ENCODE measurements at regions of chr3 and their contacts with region 1.

Region 1: DNA sequence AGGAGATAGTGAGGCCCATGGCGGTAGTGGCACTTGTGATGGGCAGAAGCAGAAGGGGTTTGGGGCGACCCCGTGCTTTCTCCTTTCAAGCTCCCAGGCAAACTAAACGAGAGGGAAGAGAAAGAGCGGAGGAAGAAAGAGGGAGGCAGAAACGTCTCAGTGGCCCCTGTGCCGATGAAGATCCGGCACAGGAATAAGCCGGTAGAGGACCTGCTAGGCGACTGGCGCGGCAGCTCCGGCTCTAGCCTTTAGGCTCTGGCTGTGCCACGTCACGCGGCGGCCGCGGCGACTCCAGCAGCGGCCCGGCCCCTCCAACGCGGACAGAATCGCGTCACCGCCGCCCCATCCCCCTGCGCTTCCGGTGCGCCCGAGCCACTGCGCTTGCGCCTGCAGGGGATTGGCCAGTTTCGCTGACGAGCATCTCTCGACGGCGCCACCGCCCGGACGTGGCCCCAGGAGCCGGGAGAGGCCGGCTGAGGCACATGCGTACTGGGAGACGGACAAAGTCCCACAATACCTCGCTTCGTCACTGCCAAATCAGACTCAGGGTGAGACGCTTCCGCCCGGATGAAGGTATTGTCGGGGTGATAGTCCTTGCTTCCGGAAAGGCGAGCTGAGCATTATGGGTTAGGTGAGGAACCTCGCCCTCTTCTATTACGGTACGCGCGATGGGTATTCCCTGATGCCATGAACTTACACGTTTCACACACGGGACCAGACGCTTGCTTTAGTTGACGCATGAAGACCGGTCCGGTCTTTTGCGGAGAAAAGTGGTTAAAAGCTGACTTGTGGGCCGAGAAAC is at the start of gene ARF4:
- DNase-seq: peak; percentile 100
- ATAC-seq: peak; percentile 94
- H3K4me3 Mint-ChIP-seq: peak within 1 kb of the TSS; percentile 92
- H3K27ac Mint-ChIP-seq: peak within 1 kb of the TSS; percentile 99
- H3K4me1 Mint-ChIP-seq: peaks cover 28% of the 10 kb centered on the region
- H3K27me3 Mint-ChIP-seq: no peaks in the 10 kb centered on the region
- total RNA-seq, gene ARF4: 46.1 to 46.3 TPM

Region 2: DNA sequence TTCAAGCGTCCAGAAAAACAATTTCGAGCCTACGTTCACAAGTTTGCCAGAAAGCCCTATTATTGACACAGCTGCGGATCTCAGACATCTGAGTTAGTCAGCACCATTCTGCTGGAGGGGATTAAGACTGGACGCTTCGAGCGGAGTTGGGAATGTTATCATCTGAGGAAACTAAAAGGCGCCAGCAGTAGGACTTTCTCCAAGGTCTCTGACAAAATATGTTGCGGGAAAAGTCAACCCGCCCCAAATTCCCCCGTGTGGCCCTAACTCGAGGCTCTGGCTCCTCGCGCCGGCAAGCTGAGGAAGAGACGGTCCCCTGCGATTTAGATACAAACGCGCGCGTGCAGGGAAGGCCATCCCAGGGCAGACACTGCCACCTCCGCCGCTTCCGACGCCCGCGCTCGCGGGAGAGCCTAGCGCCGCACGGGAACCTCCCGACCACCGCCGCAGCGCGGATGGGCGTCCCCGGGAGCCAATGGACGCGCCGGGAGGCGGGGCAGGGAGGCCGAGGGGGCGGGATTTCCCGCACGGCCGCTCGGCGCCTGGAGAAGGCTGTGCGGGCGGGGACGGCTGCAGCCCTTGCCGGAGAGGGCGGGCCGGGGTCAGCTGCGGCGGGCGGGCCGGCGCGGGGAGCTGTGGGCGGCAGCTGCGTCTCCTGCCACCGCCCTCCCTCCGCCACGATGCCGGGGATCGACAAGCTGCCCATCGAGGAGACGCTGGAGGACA is 370.0 kb before region 1 on chr3 and contains the start of gene APPL1:
- POLR2A ChIA-PET with region 1: interaction called, 13 read pairs
- DNase-seq: peak; percentile 96
- ATAC-seq: peak; percentile 96
- H3K4me3 Mint-ChIP-seq: peak within 1 kb of the TSS; percentile 85
- H3K27ac Mint-ChIP-seq: peak within 1 kb of the TSS; percentile 75
- H3K4me1 Mint-ChIP-seq: peaks cover 26% of the 10 kb centered on the region
- H3K27me3 Mint-ChIP-seq: no peaks in the 10 kb centered on the region
- total RNA-seq, gene APPL1: 32.8 to 34.9 TPM

Region 3: DNA sequence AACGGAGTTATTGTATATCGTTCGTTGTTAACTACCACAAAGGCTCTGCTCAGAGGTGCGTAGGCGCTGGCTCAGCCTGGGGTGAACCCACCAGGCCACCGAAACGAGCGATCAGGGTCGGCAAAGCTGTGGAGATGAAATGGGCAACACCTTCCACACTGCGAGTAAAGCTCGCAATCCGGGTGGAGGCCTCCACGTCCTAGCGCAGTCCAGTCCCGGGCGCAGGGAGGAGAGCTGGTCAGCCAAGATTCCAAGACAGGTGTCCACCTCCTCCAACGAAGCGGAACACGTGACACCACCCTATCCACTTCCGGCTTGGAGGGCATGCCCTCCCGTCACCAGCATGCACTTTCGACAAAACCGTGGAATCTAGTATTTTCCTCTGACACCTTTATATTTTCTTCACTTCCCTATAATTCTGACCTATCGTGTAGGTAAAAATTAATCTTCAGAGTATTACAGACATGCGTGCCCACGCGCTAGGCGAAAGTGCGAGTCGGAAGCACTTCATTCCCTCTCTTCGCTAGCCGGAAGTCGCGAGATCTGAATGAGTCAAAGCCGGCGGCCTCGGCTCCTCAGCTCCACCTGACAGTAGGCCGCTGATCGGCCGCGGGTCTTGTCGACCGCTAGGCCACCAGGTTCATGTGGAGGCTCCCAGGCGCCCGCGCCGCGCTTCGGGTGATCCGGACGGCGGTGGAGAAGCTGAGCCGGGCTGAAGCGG is 41.4 kb before region 1 on chr3 and contains the start of gene PDE12:
- POLR2A ChIA-PET with region 1: interaction called, 55 read pairs
- DNase-seq: peak; percentile 82
- ATAC-seq: peak; percentile 73
- H3K4me3 Mint-ChIP-seq: peak within 1 kb of the TSS; percentile 90
- H3K27ac Mint-ChIP-seq: peak within 1 kb of the TSS; percentile 99
- H3K4me1 Mint-ChIP-seq: peaks cover 30% of the 10 kb centered on the region
- H3K27me3 Mint-ChIP-seq: no peaks in the 10 kb centered on the region
- total RNA-seq, gene PDE12: 23.3 to 27.3 TPM

Region 4: GRCh38 chr3:57692259-57693147 is 95.2 kb after region 1 on chr3 and contains the start of gene DENND6A:
- POLR2A ChIA-PET with region 1: interaction called, 10 read pairs
- DNase-seq: peak; percentile 98
- ATAC-seq: peak; percentile 84
- H3K4me3 Mint-ChIP-seq: peak within 1 kb of the TSS; percentile 92
- H3K27ac Mint-ChIP-seq: peak within 1 kb of the TSS; percentile 85
- H3K4me1 Mint-ChIP-seq: peaks cover 30% of the 10 kb centered on the region
- H3K27me3 Mint-ChIP-seq: no peaks in the 10 kb centered on the region
- total RNA-seq, gene DENND6A: 30.6 to 31.9 TPM

Region 5: GRCh38 chr3:57755668-57756527 is 158.6 kb after region 1 on chr3 and contains the start of gene SLMAP:
- POLR2A ChIA-PET with region 1: interaction called, 17 read pairs
- DNase-seq: peak; percentile 90
- ATAC-seq: peak; percentile 97
- H3K4me3 Mint-ChIP-seq: peak within 1 kb of the TSS; percentile 93
- H3K27ac Mint-ChIP-seq: peak within 1 kb of the TSS; percentile 98
- H3K4me1 Mint-ChIP-seq: peaks cover 27% of the 10 kb centered on the region
- H3K27me3 Mint-ChIP-seq: peaks cover 16% of the 10 kb centered on the region
- total RNA-seq, gene SLMAP: 58.0 to 69.7 TPM

Measured in activated naive CD8-positive, alpha-beta T cell treated with anti-CD3 and anti-CD28 coated beads, Interleukin-2, amount 10 ng/mL, durations not matched to agents 7 days and 5 days (primary cell).